PC-3 (cell line): ENCODE measurements at regions of chr9 and their contacts with region 1.

Region 1: GRCh38 chr9:2872257-2872935 is 28.5 kb upstream of the PUM3 start:
- DNase-seq: peak; percentile 43
- ATAC-seq: peak; percentile 71
- H3K4me3 ChIP-seq: no peak overlapping the region
- H3K27ac ChIP-seq: no peak overlapping the region
- H3K4me1 ChIP-seq: no peaks in the 10 kb centered on the region
- H3K27me3 ChIP-seq: peaks cover 62% of the 10 kb centered on the region
- CTCF ChIP-seq: peak; percentile 56

Region 2: DNA sequence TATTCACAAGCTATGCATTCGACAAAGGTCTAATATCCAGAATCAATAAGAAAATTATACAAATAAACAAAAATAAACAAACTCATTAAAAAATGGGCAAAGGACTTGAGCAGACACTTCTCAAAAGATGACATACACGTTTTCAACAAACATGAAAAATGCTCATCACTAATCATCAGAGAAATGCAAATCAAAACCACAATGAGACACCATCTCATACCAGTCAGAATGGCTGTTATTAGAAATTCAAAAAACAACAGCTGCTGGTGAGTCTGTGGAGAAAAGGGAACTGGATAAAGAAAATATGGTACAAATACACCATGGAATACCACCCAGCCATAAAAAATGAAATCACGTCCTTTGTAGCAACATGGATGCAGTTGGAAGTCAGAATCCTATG is 16.6 kb after region 1 on chr9:
- CTCF ChIA-PET with region 1: no interaction called
- POLR2A ChIA-PET with region 1: no interaction called
- intact Hi-C with region 1: no loop called
- DNase-seq: no peak
- ATAC-seq: no peak
- H3K4me3 ChIP-seq: no peak overlapping the region
- H3K27ac ChIP-seq: no peak overlapping the region
- H3K4me1 ChIP-seq: no peaks in the 10 kb centered on the region
- H3K27me3 ChIP-seq: peaks cover 19% of the 10 kb centered on the region; the same call in 1 of the 2 replicates
- CTCF ChIP-seq: no peak

Region 3: GRCh38 chr9:2991292-2991691 is 118.9 kb after region 1 on chr9:
- CTCF ChIA-PET with region 1: no interaction called
- POLR2A ChIA-PET with region 1: no interaction called
- intact Hi-C with region 1: loop called (anchors 2 kb)
- DNase-seq: peak; percentile 7
- ATAC-seq: no peak
- H3K4me3 ChIP-seq: no peak overlapping the region
- H3K27ac ChIP-seq: no peak overlapping the region
- H3K4me1 ChIP-seq: no peaks in the 10 kb centered on the region
- H3K27me3 ChIP-seq: peaks cover 22% of the 10 kb centered on the region
- CTCF ChIP-seq: peak; percentile 38; the same call in 1 of the 2 replicates

Region 4: GRCh38 chr9:3181049-3181953 is 308.9 kb after region 1 on chr9:
- CTCF ChIA-PET with region 1: no interaction called
- POLR2A ChIA-PET with region 1: no interaction called
- intact Hi-C with region 1: loop called (anchors 5 kb)
- DNase-seq: peak; percentile 48
- ATAC-seq: peak; percentile 56; the same call in 1 of the 2 replicates
- H3K4me3 ChIP-seq: no peak overlapping the region
- H3K27ac ChIP-seq: no peak overlapping the region
- H3K4me1 ChIP-seq: no peaks in the 10 kb centered on the region
- H3K27me3 ChIP-seq: peaks cover 68% of the 10 kb centered on the region
- CTCF ChIP-seq: peak; percentile 43

Region 5: GRCh38 chr9:3441197-3441816 is 568.9 kb after region 1 on chr9:
- CTCF ChIA-PET with region 1: no interaction called
- POLR2A ChIA-PET with region 1: no interaction called
- intact Hi-C with region 1: loop called (anchors 5 kb)
- DNase-seq: peak; percentile 63
- ATAC-seq: peak; percentile 56
- H3K4me3 ChIP-seq: no peak overlapping the region
- H3K27ac ChIP-seq: no peak overlapping the region
- H3K4me1 ChIP-seq: no peaks in the 10 kb centered on the region
- H3K27me3 ChIP-seq: no peaks in the 10 kb centered on the region
- CTCF ChIP-seq: peak; percentile 69

Region 6: GRCh38 chr9:3662671-3663070 is 790.3 kb after region 1 on chr9:
- CTCF ChIA-PET with region 1: no interaction called
- POLR2A ChIA-PET with region 1: no interaction called
- intact Hi-C with region 1: no loop called
- DNase-seq: no peak
- ATAC-seq: no peak
- H3K4me3 ChIP-seq: no peak overlapping the region
- H3K27ac ChIP-seq: no peak overlapping the region
- H3K4me1 ChIP-seq: no peaks in the 10 kb centered on the region
- H3K27me3 ChIP-seq: no peaks in the 10 kb centered on the region
- CTCF ChIP-seq: no peak

Region 7: DNA sequence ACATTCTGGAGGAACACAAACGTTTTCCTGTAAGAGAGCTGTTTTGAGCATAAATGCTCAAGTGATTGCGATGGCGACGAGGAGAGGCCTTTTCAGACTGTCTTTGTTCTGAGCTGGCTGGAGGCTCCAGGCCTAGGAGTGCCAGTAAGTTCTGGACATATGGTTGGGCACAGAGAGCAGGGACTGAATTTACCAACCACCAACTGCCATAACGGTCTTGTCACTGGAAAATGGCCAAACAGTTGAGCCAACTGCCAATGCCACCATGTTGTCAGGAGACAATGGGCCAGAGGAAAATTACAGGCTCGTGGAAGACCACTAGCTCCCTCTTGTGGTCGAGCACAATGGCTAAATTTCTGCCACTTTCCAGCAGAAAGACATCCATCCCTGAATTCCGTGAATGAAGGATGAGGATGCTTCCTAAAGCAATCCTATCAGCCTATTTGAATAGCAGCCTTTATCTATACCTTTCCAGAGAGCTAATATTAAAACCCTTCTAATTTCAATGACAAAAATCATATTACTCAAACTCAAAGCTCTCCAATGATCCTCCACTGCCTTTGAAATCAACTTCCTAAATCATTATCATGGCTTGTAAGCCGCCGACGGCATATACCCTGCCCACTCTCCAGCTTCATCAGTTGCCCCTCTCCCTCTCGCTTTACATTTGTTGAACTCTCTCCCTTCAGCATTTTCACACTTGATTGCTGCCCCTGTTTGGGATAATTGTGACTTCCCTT is 1494.4 kb after region 1 on chr9:
- CTCF ChIA-PET with region 1: no interaction called
- POLR2A ChIA-PET with region 1: no interaction called
- intact Hi-C with region 1: loop called (anchors 5 kb)
- DNase-seq: peak; percentile 74
- ATAC-seq: 0 out of 2 replicates have a peak, but pooled peaks have one; percentile 14
- H3K4me3 ChIP-seq: no peak overlapping the region
- H3K27ac ChIP-seq: no peak overlapping the region
- H3K4me1 ChIP-seq: peaks cover 8% of the 10 kb centered on the region; the same call in 1 of the 2 replicates
- H3K27me3 ChIP-seq: no peaks in the 10 kb centered on the region
- CTCF ChIP-seq: peak; percentile 80